ENCODE measurements at regions of chr11 and their contacts with region 1.

Region 1: DNA sequence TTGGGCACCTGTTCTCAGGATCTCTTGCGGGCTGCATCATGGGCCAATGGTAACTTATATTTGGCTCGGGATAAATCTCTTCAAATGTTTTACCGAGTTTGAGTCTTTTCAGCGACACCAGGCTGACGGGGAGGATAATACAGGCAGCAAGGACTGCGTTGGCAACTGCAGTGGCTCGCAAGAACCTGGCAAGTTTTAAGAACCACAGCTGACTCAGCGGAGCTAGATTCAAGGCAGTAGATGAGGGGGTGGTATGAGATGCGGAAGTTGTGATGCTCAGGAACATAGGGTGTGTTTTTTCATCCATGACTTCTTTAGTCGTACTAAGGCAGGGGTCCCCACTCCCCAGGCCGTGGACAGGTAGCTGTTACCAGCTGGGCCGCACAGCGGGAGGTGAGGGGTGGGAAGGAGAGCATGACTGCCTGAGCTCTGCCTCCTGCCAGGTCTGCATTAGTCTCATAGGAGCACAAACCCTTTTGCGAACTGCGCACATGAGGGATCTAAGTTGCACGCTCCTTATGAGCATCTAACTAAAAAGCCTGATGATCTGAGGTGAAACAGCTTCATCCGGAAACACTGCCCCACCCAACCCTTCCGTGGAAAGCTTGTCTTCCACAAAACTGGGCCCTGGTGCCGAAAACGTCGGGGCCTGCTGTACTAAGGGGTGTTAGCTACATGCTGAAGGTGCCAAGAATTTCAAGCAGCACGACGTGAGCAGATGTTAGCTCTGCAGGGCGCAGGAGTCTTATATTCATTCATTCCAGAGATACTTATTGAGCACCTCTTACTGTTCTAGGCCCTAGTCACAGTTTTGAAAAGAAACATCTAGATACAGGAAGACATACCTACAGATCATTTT is 6.4 kb upstream of the JAM3 start:
- DNase-seq: no peak
- ATAC-seq: no peak
- H3K4me3 ChIP-seq: no peak overlapping the region
- H3K27ac ChIP-seq: no peak overlapping the region
- H3K4me1 ChIP-seq: no peaks in the 10 kb centered on the region
- H3K27me3 ChIP-seq: peaks cover 20% of the 10 kb centered on the region
- CTCF ChIP-seq: no peak

Region 2: GRCh38 chr11:134079317-134079716 is 16.8 kb after region 1 on chr11:
- CTCF ChIA-PET with region 1: no interaction called
- POLR2A ChIA-PET with region 1: no interaction called
- in situ Hi-C with region 1: no loop called
- intact Hi-C with region 1: no loop called
- DNase-seq: no peak
- ATAC-seq: no peak
- H3K4me3 ChIP-seq: no peak overlapping the region
- H3K27ac ChIP-seq: no peak overlapping the region
- H3K4me1 ChIP-seq: no peaks in the 10 kb centered on the region
- H3K27me3 ChIP-seq: no peaks in the 10 kb centered on the region
- CTCF ChIP-seq: no peak

Region 3: GRCh38 chr11:134170919-134171281 is 108.4 kb after region 1 on chr11:
- CTCF ChIA-PET with region 1: no interaction called
- POLR2A ChIA-PET with region 1: interaction called, 11 read pairs
- in situ Hi-C with region 1: no loop called
- intact Hi-C with region 1: no loop called
- DNase-seq: no peak
- ATAC-seq: no peak
- H3K4me3 ChIP-seq: no peak overlapping the region
- H3K27ac ChIP-seq: no peak overlapping the region
- H3K4me1 ChIP-seq: no peaks in the 10 kb centered on the region
- H3K27me3 ChIP-seq: no peaks in the 10 kb centered on the region
- CTCF ChIP-seq: no peak